IMR-90 (cell line): ENCODE measurements at regions of chr19 and their contacts with region 1.

Region 1: GRCh38 chr19:9785367-9786331 is 17.1 kb upstream of the ZNF846 start:
- DNase-seq: peak; percentile 92
- ATAC-seq: peak; percentile 88
- H3K4me3 ChIP-seq: peak overlapping the region; percentile 92
- H3K27ac ChIP-seq: peak overlapping the region; percentile 95
- H3K4me1 ChIP-seq: peaks cover 8% of the 10 kb centered on the region
- H3K27me3 ChIP-seq: no peaks in the 10 kb centered on the region
- CTCF ChIP-seq: no peak
- POLR2A ChIP-seq: peak; percentile 64; the same call in 1 of the 2 replicates
- RAD21 ChIP-seq: no peak

Region 2: GRCh38 chr19:9205501-9206113 is 580.0 kb before region 1 on chr19:
- CTCF ChIA-PET with region 1: no interaction called
- POLR2A ChIA-PET with region 1: no interaction called
- dilution Hi-C with region 1: no loop called
- in situ Hi-C with region 1: loop called (anchors 10 kb)
- intact Hi-C with region 1: loop called (anchors 1 kb)
- DNase-seq: peak; percentile 54
- ATAC-seq: peak; percentile 97
- H3K4me3 ChIP-seq: peak overlapping the region; percentile 17
- H3K27ac ChIP-seq: no peak overlapping the region
- H3K4me1 ChIP-seq: no peaks in the 10 kb centered on the region
- H3K27me3 ChIP-seq: no peaks in the 10 kb centered on the region
- CTCF ChIP-seq: peak; percentile 72
- POLR2A ChIP-seq: no peak
- RAD21 ChIP-seq: peak; percentile 79

Region 3: GRCh38 chr19:9309139-9309973 is 476.3 kb before region 1 on chr19 and contains the start of gene ZNF699:
- CTCF ChIA-PET with region 1: no interaction called
- POLR2A ChIA-PET with region 1: no interaction called
- dilution Hi-C with region 1: no loop called
- in situ Hi-C with region 1: no loop called
- intact Hi-C with region 1: loop called (anchors 1 kb)
- DNase-seq: peak; percentile 96
- ATAC-seq: peak; percentile 92
- H3K4me3 ChIP-seq: peak within 1 kb of the TSS; percentile 94
- H3K27ac ChIP-seq: peak within 1 kb of the TSS; percentile 86
- H3K4me1 ChIP-seq: 0 out of 2 replicates have a peak, but pooled peaks cover 2% of the 10 kb centered on the region
- H3K27me3 ChIP-seq: no peaks in the 10 kb centered on the region
- CTCF ChIP-seq: no peak
- POLR2A ChIP-seq: peak; percentile 81
- RAD21 ChIP-seq: no peak
- total RNA-seq, gene ZNF699: 7.2 and 7.3 TPM in 2 replicates

Region 4: DNA sequence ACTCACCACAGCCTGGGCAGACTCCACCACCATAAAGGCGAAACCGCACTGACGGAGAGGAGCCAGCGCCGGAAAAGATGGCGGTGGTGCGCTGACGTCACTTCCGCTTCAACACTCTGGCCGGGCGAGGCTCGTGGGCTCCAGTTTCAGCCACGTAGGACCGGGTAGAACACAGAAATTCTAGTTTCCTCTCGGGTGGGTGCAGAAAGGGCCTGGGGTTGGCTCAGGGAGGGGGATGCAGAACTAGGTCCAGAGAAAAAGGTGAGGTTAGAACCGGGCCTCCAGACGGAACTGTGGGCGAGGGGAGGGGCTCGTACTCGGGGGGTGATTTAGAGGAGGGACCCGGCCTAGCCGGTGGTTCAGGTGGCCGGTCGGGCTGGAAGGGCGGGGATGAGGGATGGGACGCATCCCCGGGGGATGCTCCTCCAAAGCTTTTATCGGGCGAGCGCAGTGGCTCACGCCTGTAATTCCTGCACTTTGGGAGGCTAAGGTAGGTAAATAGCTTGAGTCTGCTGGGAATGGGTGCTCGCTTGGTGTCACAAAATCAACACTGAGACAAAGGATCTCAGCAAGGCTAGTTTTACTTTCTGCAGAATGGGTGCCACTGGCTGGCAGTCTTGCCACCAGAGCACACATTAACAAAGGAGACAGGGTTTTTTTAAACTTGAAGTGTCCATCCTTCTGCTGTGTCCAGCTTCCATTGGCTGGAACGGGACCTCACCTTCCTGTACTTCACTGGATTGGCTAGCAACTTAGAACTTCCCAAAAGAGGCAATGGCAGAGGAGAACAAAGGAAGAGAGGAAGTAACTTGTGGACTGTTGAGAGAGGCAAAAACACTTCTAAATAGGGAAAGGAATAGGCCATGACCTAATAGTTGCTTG is 164.3 kb before region 1 on chr19 and contains the start of gene ZNF561:
- CTCF ChIA-PET with region 1: no interaction called
- POLR2A ChIA-PET with region 1: no interaction called
- dilution Hi-C with region 1: loop called (anchors 10 kb)
- in situ Hi-C with region 1: loop called (anchors 5 kb)
- intact Hi-C with region 1: loop called (anchors 1 kb)
- DNase-seq: peak; percentile 89
- ATAC-seq: peak; percentile 85
- H3K4me3 ChIP-seq: peak within 1 kb of the TSS; percentile 68
- H3K27ac ChIP-seq: peak within 1 kb of the TSS; percentile 99
- H3K4me1 ChIP-seq: peaks cover 4% of the 10 kb centered on the region; the same call in 1 of the 2 replicates
- H3K27me3 ChIP-seq: no peaks in the 10 kb centered on the region
- CTCF ChIP-seq: no peak
- POLR2A ChIP-seq: peak; percentile 80
- RAD21 ChIP-seq: no peak
- total RNA-seq, gene ZNF561: 38.9 TPM in 2 replicates

Region 5: GRCh38 chr19:9768175-9769112 is 17.2 kb before region 1 on chr19 and contains the start of gene ZNF846:
- CTCF ChIA-PET with region 1: no interaction called
- POLR2A ChIA-PET with region 1: no interaction called
- dilution Hi-C with region 1: no loop called
- in situ Hi-C with region 1: no loop called
- intact Hi-C with region 1: loop called (anchors 1 kb)
- DNase-seq: peak; percentile 96
- ATAC-seq: peak; percentile 98
- H3K4me3 ChIP-seq: peak within 1 kb of the TSS; percentile 83
- H3K27ac ChIP-seq: peak within 1 kb of the TSS; percentile 94
- H3K4me1 ChIP-seq: no peaks in the 10 kb centered on the region
- H3K27me3 ChIP-seq: no peaks in the 10 kb centered on the region
- CTCF ChIP-seq: no peak
- POLR2A ChIP-seq: peak; percentile 19; the same call in 1 of the 2 replicates
- RAD21 ChIP-seq: no peak
- total RNA-seq, gene ZNF846: 5.3 and 6.5 TPM in 2 replicates

Region 6: DNA sequence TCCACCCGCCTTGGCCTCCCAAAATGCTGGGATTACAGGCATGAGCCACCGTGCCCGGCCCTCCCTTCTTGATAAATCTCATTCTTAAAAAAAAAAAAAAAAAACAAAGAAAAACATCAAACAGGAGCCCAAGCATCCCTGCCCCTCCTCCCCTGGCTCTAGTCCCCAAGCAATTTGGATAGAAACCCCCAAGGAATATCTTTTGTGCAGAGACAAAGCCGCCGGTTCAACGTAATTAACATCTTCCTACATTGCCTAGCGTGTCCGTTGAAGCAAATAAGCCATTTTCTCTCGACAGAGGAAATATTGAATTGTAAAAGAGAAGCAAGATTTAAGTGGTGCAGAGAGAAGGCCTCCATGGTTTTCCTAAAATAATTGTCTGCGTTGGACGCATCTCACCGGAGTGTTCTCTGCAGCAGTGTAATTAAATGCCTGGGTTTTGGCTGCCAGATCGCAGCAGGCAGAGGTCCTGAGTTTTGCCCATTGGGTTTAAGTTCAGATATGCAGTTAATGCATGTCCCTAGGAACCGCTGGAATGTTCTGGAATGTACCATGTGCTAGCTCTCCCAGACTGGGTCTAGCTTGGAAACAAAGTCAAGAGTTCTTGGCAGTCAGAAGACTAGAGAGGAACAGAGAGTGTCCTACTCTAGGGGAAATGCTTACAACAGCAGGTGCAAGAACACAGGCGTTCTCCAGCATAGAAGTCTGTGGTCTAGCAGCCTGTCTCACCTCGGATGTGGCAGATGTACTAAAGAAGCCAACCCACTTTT is 80.3 kb after region 1 on chr19:
- CTCF ChIA-PET with region 1: no interaction called
- POLR2A ChIA-PET with region 1: no interaction called
- dilution Hi-C with region 1: no loop called
- in situ Hi-C with region 1: no loop called
- intact Hi-C with region 1: no loop called
- DNase-seq: no peak
- ATAC-seq: no peak
- H3K4me3 ChIP-seq: no peak overlapping the region
- H3K27ac ChIP-seq: no peak overlapping the region
- H3K4me1 ChIP-seq: no peaks in the 10 kb centered on the region
- H3K27me3 ChIP-seq: no peaks in the 10 kb centered on the region; the same call in 1 of the 2 replicates
- CTCF ChIP-seq: no peak
- POLR2A ChIP-seq: no peak
- RAD21 ChIP-seq: no peak